Activated CD4-positive, alpha-beta T cell treated with anti-CD3 and anti-CD28 coated beads, Interleukin-2, amount 10 ng/mL, durations not matched to agents 7 days and 5 days (primary cell): ENCODE measurements at regions of chr1 and their contacts with region 1.

Region 1: DNA sequence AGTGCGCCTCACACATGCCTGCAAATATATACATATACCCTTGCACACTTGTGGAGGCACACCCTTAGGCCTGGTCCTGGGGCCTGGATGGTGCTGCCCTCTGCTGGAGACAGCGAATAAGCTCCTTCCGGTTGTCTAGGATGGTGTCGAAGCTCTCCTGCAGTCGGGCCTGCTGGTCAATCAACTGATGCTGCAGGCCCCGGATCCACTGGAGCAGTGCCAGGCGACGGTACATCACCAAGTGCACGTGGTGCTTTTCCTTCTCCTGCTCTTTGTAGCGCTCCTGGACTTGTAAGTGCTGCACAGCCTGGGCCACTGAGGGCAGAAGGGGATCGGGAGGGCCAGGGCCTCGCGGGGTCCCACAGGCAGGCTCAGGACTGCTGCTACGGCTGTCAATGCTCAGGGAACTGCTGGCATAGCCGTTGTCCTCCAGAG is 3.1 kb downstream of the C1orf216 start:
- DNase-seq: peak; percentile 86
- H3K4me3 Mint-ChIP-seq: no peak overlapping the region
- H3K27ac Mint-ChIP-seq: peak overlapping the region; percentile 1
- H3K4me1 Mint-ChIP-seq: peaks cover 30% of the 10 kb centered on the region
- H3K27me3 Mint-ChIP-seq: no peaks in the 10 kb centered on the region

Region 2: GRCh38 chr1:35451125-35451528 is 264.5 kb before region 1 on chr1:
- CTCF ChIA-PET with region 1: interaction called, 10 read pairs
- POLR2A ChIA-PET with region 1: no interaction called
- DNase-seq: peak; percentile 83
- H3K4me3 Mint-ChIP-seq: no peak overlapping the region
- H3K27ac Mint-ChIP-seq: peak overlapping the region; percentile 80
- H3K4me1 Mint-ChIP-seq: peaks cover 34% of the 10 kb centered on the region
- H3K27me3 Mint-ChIP-seq: no peaks in the 10 kb centered on the region

Region 3: GRCh38 chr1:35564037-35564883 is 151.3 kb before region 1 on chr1:
- CTCF ChIA-PET with region 1: interaction called, 16 read pairs
- POLR2A ChIA-PET with region 1: no interaction called
- DNase-seq: peak; percentile 89
- H3K4me3 Mint-ChIP-seq: no peak overlapping the region
- H3K27ac Mint-ChIP-seq: peak overlapping the region; percentile 33
- H3K4me1 Mint-ChIP-seq: peaks cover 27% of the 10 kb centered on the region
- H3K27me3 Mint-ChIP-seq: no peaks in the 10 kb centered on the region

Region 4: GRCh38 chr1:35577071-35577998 is 138.2 kb before region 1 on chr1:
- CTCF ChIA-PET with region 1: interaction called, 10 read pairs
- POLR2A ChIA-PET with region 1: no interaction called
- DNase-seq: peak; percentile 78
- H3K4me3 Mint-ChIP-seq: peak overlapping the region; percentile 70
- H3K27ac Mint-ChIP-seq: peak overlapping the region; percentile 85
- H3K4me1 Mint-ChIP-seq: peaks cover 29% of the 10 kb centered on the region
- H3K27me3 Mint-ChIP-seq: peaks cover 21% of the 10 kb centered on the region

Region 5: DNA sequence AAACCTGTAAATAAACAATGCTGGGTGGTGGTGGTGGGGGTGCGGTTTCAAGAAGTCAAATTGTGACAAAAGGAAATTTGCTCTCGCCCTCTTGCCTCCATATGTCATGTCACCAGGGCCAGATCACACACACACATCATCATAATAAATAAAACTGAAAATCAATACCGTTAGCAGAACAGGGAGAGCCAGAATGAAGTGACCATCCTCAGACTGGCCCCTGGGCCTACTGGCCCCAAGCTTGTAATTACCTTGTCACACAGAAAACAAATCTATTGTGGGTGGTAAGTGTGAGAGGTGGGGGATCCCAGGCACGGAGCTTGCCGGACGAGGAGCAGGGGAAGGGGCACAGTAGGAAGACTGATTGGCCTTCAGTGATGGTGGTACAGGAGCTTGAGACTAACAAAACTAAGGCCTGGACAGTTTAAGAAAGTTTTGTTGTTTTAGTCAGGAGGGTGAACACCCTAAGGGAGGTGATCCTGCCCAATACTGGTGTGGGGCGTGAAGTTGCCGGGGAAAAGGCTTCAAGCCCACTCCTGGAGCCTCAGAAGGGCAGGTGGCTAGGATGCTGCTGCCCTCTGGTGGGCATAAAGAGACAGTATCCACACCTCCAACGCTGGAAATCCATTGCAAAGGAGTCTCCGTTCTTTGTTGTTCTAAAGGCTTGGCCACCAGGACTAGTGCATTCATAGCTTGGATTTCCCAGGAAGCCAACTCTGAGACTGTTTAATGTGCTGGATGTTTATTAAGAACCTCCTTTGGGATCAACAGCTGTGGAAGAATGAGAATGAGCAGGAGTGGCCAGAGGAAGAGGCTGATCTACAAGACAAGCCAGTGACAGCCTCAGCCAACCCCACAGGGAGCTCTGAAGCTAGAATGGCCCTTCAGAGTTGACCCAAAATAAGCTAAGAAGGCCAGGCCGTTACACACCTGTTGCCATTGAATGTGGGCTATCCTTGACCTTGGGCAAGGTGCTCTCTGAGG is 11.2 kb after region 1 on chr1:
- CTCF ChIA-PET with region 1: interaction called, 30 read pairs
- POLR2A ChIA-PET with region 1: no interaction called
- DNase-seq: peak; percentile 47
- H3K4me3 Mint-ChIP-seq: no peak overlapping the region
- H3K27ac Mint-ChIP-seq: no peak overlapping the region
- H3K4me1 Mint-ChIP-seq: no peaks in the 10 kb centered on the region
- H3K27me3 Mint-ChIP-seq: no peaks in the 10 kb centered on the region

Region 6: DNA sequence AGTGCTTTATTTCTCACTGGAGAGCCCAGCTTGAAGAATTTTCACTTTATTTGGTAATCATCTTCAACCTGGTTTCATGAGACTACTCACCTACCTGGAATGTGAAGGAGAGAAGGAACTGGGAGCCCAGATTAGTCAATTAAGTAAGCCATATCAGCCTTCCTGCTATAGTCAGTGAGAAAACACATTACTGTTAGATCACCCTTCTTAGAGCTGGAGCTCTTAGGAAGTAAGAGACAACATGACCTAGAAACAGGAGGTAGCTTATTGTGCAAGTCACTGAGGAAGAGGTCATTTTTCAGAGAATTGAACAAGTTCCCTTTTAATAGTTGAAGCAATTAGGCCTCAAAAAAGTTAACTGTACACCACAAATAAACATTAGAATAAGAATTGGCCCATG is 319.1 kb after region 1 on chr1:
- CTCF ChIA-PET with region 1: no interaction called
- POLR2A ChIA-PET with region 1: no interaction called
- DNase-seq: no peak
- H3K4me3 Mint-ChIP-seq: no peak overlapping the region
- H3K27ac Mint-ChIP-seq: no peak overlapping the region
- H3K4me1 Mint-ChIP-seq: peaks cover 5% of the 10 kb centered on the region
- H3K27me3 Mint-ChIP-seq: no peaks in the 10 kb centered on the region